Transverse colon (tissue), 4 donors: ENCODE measurements at regions of chr7 and their contacts with region 1.

Region 1: DNA sequence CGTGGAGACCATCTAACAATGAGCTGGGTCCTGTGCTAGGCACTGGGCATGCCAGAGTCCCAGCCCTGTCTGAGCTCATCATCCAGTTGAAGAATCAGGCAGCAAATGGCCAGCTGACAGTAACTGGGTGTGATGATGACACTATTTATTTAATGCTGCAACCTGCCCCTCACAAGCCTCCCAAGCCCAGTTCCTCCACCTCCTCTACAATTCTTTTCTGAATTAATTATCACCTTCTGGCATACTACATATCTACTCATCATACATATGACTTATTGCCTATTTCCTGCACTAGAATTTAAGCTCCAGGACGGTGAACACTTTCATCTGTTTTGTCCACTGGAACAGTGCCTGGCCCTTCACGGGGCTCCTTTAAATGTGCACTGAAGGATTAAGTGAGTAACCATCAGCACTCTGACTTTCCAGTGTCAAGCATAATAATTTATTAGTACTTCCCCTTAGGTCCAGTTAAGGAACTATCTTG is 96.7 kb upstream of the LAMB4 start:
- DNase-seq: no peak
- H3K4me3 ChIP-seq: no peak overlapping the region
- H3K27ac ChIP-seq: no peak overlapping the region
- H3K4me1 ChIP-seq: no peaks in the 10 kb centered on the region
- H3K27me3 ChIP-seq: no peaks in the 10 kb centered on the region
- CTCF ChIP-seq: no peak
- EP300 ChIP-seq: no peak
- POLR2A ChIP-seq: no peak

Region 2: GRCh38 chr7:106610996-106611886 is 1615.6 kb before region 1 on chr7:
- in situ Hi-C with region 1: no loop called
- intact Hi-C with region 1: loop called (anchors 5 kb)
- DNase-seq: no peak
- H3K4me3 ChIP-seq: no peak overlapping the region
- H3K27ac ChIP-seq: no peak overlapping the region
- H3K4me1 ChIP-seq: peaks cover 0 to 31% (median 13%) of the 10 kb centered on the region in 4 donors
- H3K27me3 ChIP-seq: no peaks in the 10 kb centered on the region
- CTCF ChIP-seq: no peak
- EP300 ChIP-seq: no peak
- POLR2A ChIP-seq: no peak

Region 3: DNA sequence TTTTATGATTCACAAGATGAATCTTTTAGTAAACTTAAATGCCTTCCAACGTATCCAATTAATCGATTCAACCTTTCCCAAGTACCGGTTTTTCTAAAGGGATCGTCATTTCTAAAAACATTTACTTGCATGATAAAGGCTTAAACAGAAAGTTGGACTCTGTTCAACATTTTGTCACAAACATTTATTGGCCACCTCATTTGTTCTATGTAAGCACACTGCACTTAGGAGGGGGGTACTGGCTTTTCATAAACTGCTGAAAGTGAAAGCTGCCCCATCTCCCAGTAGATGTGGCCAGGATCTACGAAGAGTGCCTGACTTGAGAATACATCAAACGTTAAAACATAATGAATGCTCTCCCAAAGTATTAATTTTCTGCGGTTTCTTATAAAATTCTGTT is 59.4 kb before region 1 on chr7:
- in situ Hi-C with region 1: no loop called
- intact Hi-C with region 1: no loop called
- DNase-seq: no peak
- H3K4me3 ChIP-seq: no peak overlapping the region
- H3K27ac ChIP-seq: no peak overlapping the region
- H3K4me1 ChIP-seq: no peaks in the 10 kb centered on the region
- H3K27me3 ChIP-seq: no peaks in the 10 kb centered on the region
- CTCF ChIP-seq: no peak
- EP300 ChIP-seq: no peak
- POLR2A ChIP-seq: no peak

Region 4: GRCh38 chr7:108246227-108246837 is 19.5 kb after region 1 on chr7:
- in situ Hi-C with region 1: no loop called
- intact Hi-C with region 1: no loop called
- DNase-seq: no peak
- H3K4me3 ChIP-seq: no peak overlapping the region
- H3K27ac ChIP-seq: no peak overlapping the region
- H3K4me1 ChIP-seq: no peaks in the 10 kb centered on the region
- H3K27me3 ChIP-seq: no peaks in the 10 kb centered on the region
- CTCF ChIP-seq: no peak
- EP300 ChIP-seq: no peak
- POLR2A ChIP-seq: no peak

Region 5: DNA sequence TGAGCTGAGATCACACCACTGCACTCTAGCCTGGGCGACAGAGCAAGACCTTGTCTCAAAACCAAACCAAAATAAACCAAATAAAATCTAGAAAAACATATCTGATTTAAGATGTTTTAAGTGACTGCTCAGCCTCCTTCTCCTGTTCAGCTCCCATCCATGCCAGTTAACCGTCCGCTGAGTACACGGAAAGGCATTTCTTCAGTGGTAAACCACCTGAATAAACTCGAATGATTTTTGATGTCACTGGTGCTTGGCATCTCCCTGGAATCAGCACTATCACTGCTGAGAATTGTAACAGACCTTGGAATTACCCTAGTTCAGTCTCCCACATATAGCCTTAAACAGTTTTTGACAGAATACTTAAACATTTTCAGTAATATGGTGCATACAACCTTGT is 253.5 kb after region 1 on chr7:
- in situ Hi-C with region 1: no loop called
- intact Hi-C with region 1: no loop called
- DNase-seq: no peak
- H3K4me3 ChIP-seq: no peak overlapping the region
- H3K27ac ChIP-seq: no peak overlapping the region
- H3K4me1 ChIP-seq: no peaks in the 10 kb centered on the region
- H3K27me3 ChIP-seq: no peaks in the 10 kb centered on the region
- CTCF ChIP-seq: no peak
- EP300 ChIP-seq: no peak
- POLR2A ChIP-seq: no peak